KBM-7 (cell line): ENCODE measurements at regions of chr2 and their contacts with region 1.

Region 1: GRCh38 chr2:69914170-69914960 is 544 bp upstream of the MXD1 start:
- DNase-seq: peak; percentile 100

Region 2: DNA sequence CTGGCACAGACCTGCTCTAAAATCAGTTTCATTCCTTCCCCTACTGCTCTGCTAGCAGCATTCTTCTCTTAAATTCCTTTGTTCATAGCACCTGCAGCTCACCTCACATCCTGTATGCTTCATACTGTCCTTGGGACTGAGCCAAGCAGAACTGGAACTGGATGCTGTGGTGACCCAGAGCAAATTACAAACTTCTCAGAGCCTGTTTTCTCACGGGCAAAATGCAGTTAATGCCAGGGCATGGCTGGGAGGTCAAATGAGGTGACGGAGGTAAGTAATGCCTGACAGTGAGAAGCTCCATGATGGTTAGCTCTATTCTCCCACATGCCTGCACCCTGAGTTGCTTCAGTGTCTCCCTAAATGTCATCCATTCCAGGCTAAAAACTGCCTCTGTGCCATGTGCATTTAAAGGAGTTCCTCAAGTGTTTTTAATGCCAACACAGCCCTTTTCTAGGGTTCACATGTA is 246.7 kb after region 1 on chr2:
- in situ Hi-C with region 1: loop called (anchors 25 kb)
- DNase-seq: no peak